ENCODE measurements at regions of chr7 and their contacts with region 1.

Region 1: GRCh38 chr7:100478966-100479665 is at the start of gene TSC22D4:
- DNase-seq: peak; percentile 83
- H3K4me3 Mint-ChIP-seq: peak within 1 kb of the TSS; percentile 89
- H3K27ac Mint-ChIP-seq: peak within 1 kb of the TSS; percentile 77
- H3K4me1 Mint-ChIP-seq: peaks cover 16% of the 10 kb centered on the region
- H3K27me3 Mint-ChIP-seq: no peaks in the 10 kb centered on the region
- CTCF ChIP-seq: no peak
- total RNA-seq, gene TSC22D4: 24.4 and 27.3 TPM in 2 replicates

Region 2: GRCh38 chr7:99782012-99782940 is 696.8 kb before region 1 on chr7:
- CTCF ChIA-PET with region 1: no interaction called
- intact Hi-C with region 1: no loop called
- DNase-seq: no peak
- H3K4me3 Mint-ChIP-seq: no peak overlapping the region
- H3K27ac Mint-ChIP-seq: no peak overlapping the region
- H3K4me1 Mint-ChIP-seq: no peaks in the 10 kb centered on the region
- H3K27me3 Mint-ChIP-seq: no peaks in the 10 kb centered on the region
- CTCF ChIP-seq: no peak

Region 3: GRCh38 chr7:100520138-100520537 is 41.0 kb after region 1 on chr7:
- CTCF ChIA-PET with region 1: no interaction called
- intact Hi-C with region 1: no loop called
- DNase-seq: no peak
- H3K4me3 Mint-ChIP-seq: no peak overlapping the region
- H3K27ac Mint-ChIP-seq: no peak overlapping the region
- H3K4me1 Mint-ChIP-seq: no peaks in the 10 kb centered on the region
- H3K27me3 Mint-ChIP-seq: no peaks in the 10 kb centered on the region
- CTCF ChIP-seq: no peak

Region 4: DNA sequence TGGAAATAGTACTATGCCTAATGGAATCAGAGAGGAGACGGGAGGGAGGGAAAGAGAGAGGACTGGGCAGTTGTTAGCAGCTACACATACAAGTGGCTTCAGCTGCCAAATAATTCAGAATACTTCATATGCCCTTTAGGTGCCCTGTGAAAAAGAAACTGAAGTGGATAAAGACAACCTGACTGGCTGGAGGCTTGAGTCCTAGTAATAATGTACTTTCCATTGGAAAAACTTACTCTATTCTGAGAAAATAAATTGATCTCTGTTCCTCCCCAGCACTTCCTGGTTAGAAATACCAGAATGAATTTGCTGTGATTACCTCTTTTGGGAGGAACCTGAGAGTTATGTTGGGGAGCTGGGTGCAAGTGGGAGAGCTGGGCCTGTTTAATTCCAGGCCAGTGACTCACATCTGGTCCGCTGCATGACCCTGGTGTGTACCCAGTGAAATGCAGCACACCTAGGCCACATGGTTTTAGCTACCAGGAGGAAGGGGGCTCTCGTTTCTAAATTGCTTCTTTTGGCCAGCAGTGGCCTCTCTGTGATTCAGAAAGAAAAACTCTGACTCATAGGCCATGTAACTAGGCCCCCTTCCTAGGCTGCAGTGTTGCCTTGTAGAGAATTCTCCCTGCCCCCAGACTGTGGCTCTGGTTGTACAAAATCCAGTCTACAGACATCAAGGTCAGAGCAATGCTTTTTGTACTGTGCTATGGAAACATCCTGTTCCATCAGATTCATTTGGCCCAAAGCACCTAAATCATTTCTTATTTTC is 66.4 kb after region 1 on chr7:
- CTCF ChIA-PET with region 1: interaction called, 3 read pairs
- intact Hi-C with region 1: loop called (anchors 5 kb)
- DNase-seq: peak; percentile 79
- H3K4me3 Mint-ChIP-seq: peak overlapping the region; percentile 56
- H3K27ac Mint-ChIP-seq: peak overlapping the region; percentile 99
- H3K4me1 Mint-ChIP-seq: peaks cover 80% of the 10 kb centered on the region
- H3K27me3 Mint-ChIP-seq: no peaks in the 10 kb centered on the region
- CTCF ChIP-seq: no peak

Measured in Calu3 (cell line).